ENCODE measurements at regions of chr9 and their contacts with region 1.

Region 1: DNA sequence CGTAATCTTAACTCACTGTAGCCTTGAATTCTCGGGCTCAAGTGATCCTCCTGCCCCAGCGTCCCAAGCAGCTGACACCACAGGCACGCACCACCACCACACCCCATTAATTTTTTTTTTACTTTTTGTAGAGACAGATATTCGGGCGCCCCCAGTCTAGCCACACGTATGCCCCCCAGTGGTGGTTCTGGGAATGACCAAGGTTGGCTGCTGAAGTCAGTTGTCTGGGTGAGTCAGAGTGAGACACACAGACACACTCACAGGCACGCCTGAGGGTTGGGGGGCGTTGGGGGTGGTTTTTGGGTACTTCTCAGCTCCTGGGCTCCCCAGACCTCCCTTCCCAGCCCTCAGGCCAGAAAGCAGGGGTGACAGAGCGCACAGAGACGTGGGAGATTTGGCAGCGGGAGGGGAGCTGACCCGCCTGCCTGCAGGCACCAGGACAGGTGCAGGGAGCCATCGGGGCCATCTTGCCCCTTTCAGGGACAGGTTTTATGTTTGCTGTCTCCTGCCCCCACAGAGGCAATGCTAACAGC is 4.2 kb upstream of the ENTPD8 start:
- DNase-seq: peak; percentile 81 to 93 (median 85)
- H3K4me3 ChIP-seq: no peak overlapping the region
- H3K27ac ChIP-seq: no peak overlapping the region
- H3K4me1 ChIP-seq: peaks cover 3 to 5% of the 10 kb centered on the region in 2 donors
- H3K27me3 ChIP-seq: no peaks in the 10 kb centered on the region
- CTCF ChIP-seq: peak; percentile 77 to 89 (median 82)
- POLR2A ChIP-seq: no peak

Region 2: GRCh38 chr9:137423004-137423874 is 22.1 kb before region 1 on chr9 and contains the starts of genes EXD3 and NOXA1:
- intact Hi-C with region 1: loop called in 1 of 2 experiments (anchors 2 kb)
- DNase-seq: peak; percentile 94 to 96 (median 95)
- H3K4me3 ChIP-seq: peak within 1 kb of the TSS; percentile 39 to 98 (median 84)
- H3K27ac ChIP-seq: peak within 1 kb of the TSS in 4 of 5 donors; percentile 18 to 86 (median 62)
- H3K4me1 ChIP-seq: peaks cover 0 to 19% of the 10 kb centered on the region in 2 donors
- H3K27me3 ChIP-seq: no peaks in the 10 kb centered on the region
- CTCF ChIP-seq: peak; percentile 7 to 87 (median 54)
- POLR2A ChIP-seq: peak; percentile 43 to 60
- total RNA-seq, gene EXD3: 8.5 to 38.6 (median 20.3) TPM
- total RNA-seq, gene NOXA1: 2.9 to 12.6 (median 9.1) TPM

Region 3: GRCh38 chr9:137590462-137591383 is 145.4 kb after region 1 on chr9 and contains the start of gene ZMYND19:
- intact Hi-C with region 1: no loop called
- DNase-seq: peak; percentile 88 to 93 (median 90)
- H3K4me3 ChIP-seq: peak within 1 kb of the TSS; percentile 42 to 93 (median 66)
- H3K27ac ChIP-seq: peak within 1 kb of the TSS in 3 of 5 donors; percentile 15 to 83 (median 47)
- H3K4me1 ChIP-seq: peaks cover 7 to 16% of the 10 kb centered on the region in 2 donors
- H3K27me3 ChIP-seq: no peaks in the 10 kb centered on the region
- CTCF ChIP-seq: no peak
- POLR2A ChIP-seq: peak in 1 of 2 donors; percentile 43
- total RNA-seq, gene ZMYND19: 5.2 to 26.2 (median 17.6) TPM